Breast epithelium (tissue), 4 donors: ENCODE measurements at regions of chr3 and their contacts with region 1.

Region 1: GRCh38 chr3:474828-475227 is 278.3 kb downstream of the CHL1 start:
- DNase-seq: no peak
- H3K4me3 ChIP-seq: no peak overlapping the region
- H3K27ac ChIP-seq: no peak overlapping the region
- H3K4me1 ChIP-seq: no peaks in the 10 kb centered on the region
- H3K27me3 ChIP-seq: no peaks in the 10 kb centered on the region
- CTCF ChIP-seq: no peak
- POLR2A ChIP-seq: no peak

Region 2: DNA sequence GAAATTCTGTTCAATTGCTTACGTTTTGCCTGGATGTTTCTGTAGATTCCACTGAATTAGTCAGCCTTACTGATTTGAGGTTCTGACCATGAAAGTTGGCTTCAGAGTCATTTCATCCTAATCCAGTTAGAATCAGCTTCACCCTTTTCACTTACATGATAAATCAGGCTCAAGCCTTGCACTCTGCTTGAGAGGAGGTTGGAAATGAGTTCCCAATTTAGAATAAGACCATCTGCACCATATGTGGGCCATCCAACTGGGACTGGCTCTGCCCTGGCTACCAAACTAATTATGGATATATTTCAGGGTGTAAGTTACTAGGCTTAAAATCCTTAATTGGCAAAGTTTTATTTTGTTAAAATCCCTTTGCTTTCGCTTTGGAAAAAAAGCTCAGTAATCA is 22.6 kb before region 1 on chr3:
- intact Hi-C with region 1: no loop called
- DNase-seq: no peak
- H3K4me3 ChIP-seq: no peak overlapping the region
- H3K27ac ChIP-seq: no peak overlapping the region
- H3K4me1 ChIP-seq: no peaks in the 10 kb centered on the region
- H3K27me3 ChIP-seq: no peaks in the 10 kb centered on the region
- CTCF ChIP-seq: no peak
- POLR2A ChIP-seq: no peak

Region 3: DNA sequence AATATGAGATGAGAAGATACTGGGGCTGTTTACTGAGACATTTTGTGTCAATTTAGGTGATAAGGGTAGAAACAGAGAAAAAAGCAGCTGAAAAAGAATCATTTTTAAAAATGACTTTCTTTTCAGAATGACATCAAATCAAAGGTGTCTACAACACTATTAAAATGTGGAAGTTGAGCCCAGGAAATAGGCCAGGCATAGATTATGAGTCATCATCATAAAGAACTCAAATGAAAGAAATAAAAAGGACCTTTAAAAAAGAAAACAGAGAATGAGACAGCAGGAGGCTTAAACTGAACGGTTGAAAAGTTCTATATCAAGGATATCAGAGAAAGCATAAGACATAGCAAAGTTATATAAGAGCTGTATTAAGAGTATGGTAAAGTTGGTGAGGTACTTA is 1060.5 kb after region 1 on chr3:
- intact Hi-C with region 1: loop called (anchors 5 kb)
- DNase-seq: no peak
- H3K4me3 ChIP-seq: no peak overlapping the region
- H3K27ac ChIP-seq: no peak overlapping the region
- H3K4me1 ChIP-seq: no peaks in the 10 kb centered on the region
- H3K27me3 ChIP-seq: no peaks in the 10 kb centered on the region
- CTCF ChIP-seq: no peak
- POLR2A ChIP-seq: no peak